Sigmoid colon (tissue), 7 donors: ENCODE measurements at regions of chr20 and their contacts with region 1.

Region 1: GRCh38 chr20:44388466-44389023 is 33.0 kb downstream of the HNF4A start:
- DNase-seq: peak; percentile 71
- H3K4me3 ChIP-seq: no peak overlapping the region
- H3K27ac ChIP-seq: no peak overlapping the region
- H3K4me1 ChIP-seq: peaks cover 0 to 5% (median 2%) of the 10 kb centered on the region in 4 donors
- H3K27me3 ChIP-seq: peaks cover 0 to 49% (median 18%) of the 10 kb centered on the region in 3 donors
- CTCF ChIP-seq: peak; percentile 11 to 56 (median 53)
- EP300 ChIP-seq: no peak
- POLR2A ChIP-seq: no peak

Region 2: DNA sequence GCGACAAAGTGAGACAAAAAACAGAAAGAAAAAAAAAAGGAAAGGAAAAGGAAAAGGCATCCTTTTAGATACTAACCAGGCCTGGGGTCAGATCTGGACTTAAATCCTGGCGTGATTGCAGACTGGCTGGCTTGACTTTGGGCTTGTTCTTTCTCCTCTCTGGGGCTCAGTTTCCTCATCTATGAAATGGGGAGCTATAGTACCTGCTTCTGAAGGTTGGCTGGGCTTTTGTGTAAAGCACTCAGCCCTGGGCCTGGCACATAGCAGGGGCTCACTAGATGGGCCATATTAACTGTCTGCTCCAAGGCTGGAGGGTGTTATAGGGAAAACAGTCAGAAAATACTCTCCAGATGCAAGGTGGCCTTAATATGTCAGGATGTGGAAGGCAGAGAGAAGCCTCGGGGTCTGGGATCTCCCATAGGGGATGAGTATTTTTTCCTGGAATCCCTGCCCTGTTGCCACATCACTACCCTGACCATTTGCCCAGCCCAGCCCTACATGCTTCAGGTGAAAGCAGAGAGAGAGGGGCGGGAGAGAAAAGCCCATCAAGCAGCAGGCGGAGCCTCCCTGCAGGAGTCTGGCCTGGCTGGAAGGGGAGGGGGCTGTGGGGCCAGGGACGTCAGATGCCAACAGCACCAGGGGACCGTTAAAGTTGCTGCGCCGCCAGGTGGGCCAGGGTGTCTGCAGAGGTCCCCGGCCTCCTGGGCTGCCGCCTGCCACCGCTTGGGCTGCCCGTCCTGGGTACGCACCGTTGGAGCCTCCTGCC is 52.7 kb before region 1 on chr20:
- intact Hi-C with region 1: no loop called
- DNase-seq: no peak
- H3K4me3 ChIP-seq: no peak overlapping the region
- H3K27ac ChIP-seq: no peak overlapping the region
- H3K4me1 ChIP-seq: no peaks in the 10 kb centered on the region
- H3K27me3 ChIP-seq: peaks cover 0 to 28% (median 0%) of the 10 kb centered on the region in 3 donors
- CTCF ChIP-seq: no peak
- EP300 ChIP-seq: no peak
- POLR2A ChIP-seq: no peak

Region 3: DNA sequence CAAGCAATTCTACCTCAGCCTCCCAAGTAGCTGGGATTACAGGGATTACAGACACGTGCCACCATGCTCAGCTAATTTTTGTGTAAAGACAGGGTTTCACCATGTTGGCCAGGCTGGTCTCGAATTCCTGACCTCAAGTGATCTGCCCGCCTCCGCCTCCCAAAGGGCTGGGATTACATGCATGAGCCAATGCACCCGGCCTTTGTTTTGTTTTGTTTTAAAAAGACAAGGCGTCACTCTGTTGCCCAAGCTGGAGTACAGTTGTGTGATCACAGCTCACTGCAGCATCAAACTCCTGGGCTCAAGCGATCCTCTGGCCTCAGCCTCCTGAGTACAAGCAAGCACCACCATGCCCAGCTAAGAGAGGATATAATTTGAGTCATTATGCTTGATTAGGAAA is 127.9 kb after region 1 on chr20:
- intact Hi-C with region 1: loop called (anchors 10 kb)
- DNase-seq: no peak
- H3K4me3 ChIP-seq: no peak overlapping the region
- H3K27ac ChIP-seq: peak overlapping the region in 1 of 4 donors; percentile 38
- H3K4me1 ChIP-seq: peaks cover 0 to 81% (median 70%) of the 10 kb centered on the region in 4 donors
- H3K27me3 ChIP-seq: no peaks in the 10 kb centered on the region
- CTCF ChIP-seq: no peak
- EP300 ChIP-seq: no peak
- POLR2A ChIP-seq: no peak

Region 4: GRCh38 chr20:44609511-44610312 is 221.2 kb after region 1 on chr20:
- intact Hi-C with region 1: loop called (anchors 2 kb)
- DNase-seq: peak; percentile 94
- H3K4me3 ChIP-seq: peak overlapping the region; percentile 9 to 38 (median 25)
- H3K27ac ChIP-seq: peak overlapping the region; percentile 83 to 95 (median 90)
- H3K4me1 ChIP-seq: peaks cover 0 to 47% (median 42%) of the 10 kb centered on the region in 4 donors
- H3K27me3 ChIP-seq: no peaks in the 10 kb centered on the region
- CTCF ChIP-seq: peak; percentile 97 to 98 (median 98)
- EP300 ChIP-seq: no peak
- POLR2A ChIP-seq: no peak

Region 5: DNA sequence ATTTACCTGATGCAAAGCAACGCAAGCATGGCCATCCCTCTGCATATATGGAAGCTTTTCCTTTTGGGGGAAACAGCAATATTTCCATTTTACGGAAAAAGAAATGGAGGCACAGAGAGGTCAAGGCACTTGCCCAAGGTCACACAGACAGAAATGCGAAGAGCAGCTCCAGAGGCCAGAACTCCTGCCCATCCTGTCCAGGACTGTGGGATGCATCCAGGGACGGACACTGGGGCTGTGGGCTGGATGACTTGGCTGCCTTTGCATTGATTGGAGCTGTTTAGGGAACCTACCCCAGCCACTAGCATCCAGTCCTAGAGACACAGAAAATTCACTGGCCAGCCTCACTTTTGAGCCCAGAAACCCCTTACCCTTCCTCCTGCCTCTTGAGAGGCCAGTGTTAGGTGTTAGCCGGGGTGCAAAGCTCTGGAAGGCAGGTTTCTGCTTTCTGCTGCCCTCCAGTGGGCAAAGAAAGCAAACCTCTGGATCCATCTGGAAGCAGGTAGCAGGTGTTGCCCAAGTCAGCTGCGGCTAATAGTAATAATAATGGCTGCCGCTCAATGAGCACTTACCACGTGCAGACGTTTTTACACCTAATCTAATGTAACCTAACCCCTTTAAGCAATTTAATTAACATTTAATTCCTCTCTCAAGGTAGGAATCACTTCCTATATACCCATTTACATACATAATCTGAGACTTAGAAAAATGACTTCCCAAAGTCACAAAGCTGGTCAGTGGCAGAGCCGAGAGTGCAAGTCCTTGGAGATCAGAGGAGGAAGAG is 294.9 kb after region 1 on chr20:
- intact Hi-C with region 1: loop called (anchors 2 kb)
- DNase-seq: no peak
- H3K4me3 ChIP-seq: no peak overlapping the region
- H3K27ac ChIP-seq: no peak overlapping the region
- H3K4me1 ChIP-seq: peaks cover 0 to 9% (median 0%) of the 10 kb centered on the region in 4 donors
- H3K27me3 ChIP-seq: no peaks in the 10 kb centered on the region
- CTCF ChIP-seq: peak in 2 of 4 experiments; percentile 42 to 57
- EP300 ChIP-seq: no peak
- POLR2A ChIP-seq: no peak

Region 6: GRCh38 chr20:44733341-44734069 is 345.0 kb after region 1 on chr20:
- intact Hi-C with region 1: loop called (anchors 5 kb)
- DNase-seq: peak; percentile 86
- H3K4me3 ChIP-seq: no peak overlapping the region
- H3K27ac ChIP-seq: no peak overlapping the region
- H3K4me1 ChIP-seq: peaks cover 0 to 39% (median 23%) of the 10 kb centered on the region in 4 donors
- H3K27me3 ChIP-seq: no peaks in the 10 kb centered on the region
- CTCF ChIP-seq: peak; percentile 87 to 91 (median 87)
- EP300 ChIP-seq: no peak
- POLR2A ChIP-seq: no peak

Region 7: DNA sequence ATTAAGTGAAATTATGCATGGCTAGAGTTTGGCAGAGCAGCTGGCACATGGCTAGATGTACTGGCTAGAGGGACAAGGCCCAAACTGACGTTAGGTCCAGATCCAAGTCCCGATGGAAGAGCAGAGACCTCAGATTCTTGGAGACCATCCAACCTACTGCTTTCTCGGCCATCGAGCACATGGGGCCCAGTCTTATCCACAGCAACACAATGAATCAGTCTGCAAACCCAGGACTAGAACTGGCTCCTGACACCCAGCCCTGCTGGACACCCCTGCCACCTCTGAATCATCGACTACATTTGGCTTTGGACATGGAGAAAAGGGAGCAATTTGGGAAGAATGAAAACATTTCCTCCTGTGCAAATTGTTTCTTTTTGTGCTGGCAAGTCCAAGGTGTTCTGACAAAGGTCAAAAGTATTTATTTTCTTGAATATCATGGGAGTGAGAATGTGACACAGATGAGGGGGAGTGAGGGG is 473.0 kb after region 1 on chr20:
- intact Hi-C with region 1: loop called (anchors 10 kb)
- DNase-seq: peak; percentile 74
- H3K4me3 ChIP-seq: no peak overlapping the region
- H3K27ac ChIP-seq: peak overlapping the region in 1 of 4 donors; percentile 79
- H3K4me1 ChIP-seq: peaks cover 0 to 22% (median 14%) of the 10 kb centered on the region in 4 donors
- H3K27me3 ChIP-seq: no peaks in the 10 kb centered on the region
- CTCF ChIP-seq: no peak
- EP300 ChIP-seq: no peak
- POLR2A ChIP-seq: no peak